MCF 10A (cell line): ENCODE measurements at regions of chr4 and their contacts with region 1.

Region 1: GRCh38 chr4:23717528-23718248 is 172.2 kb downstream of the PPARGC1A start:
- DNase-seq: peak; percentile 34
- H3K4me3 Mint-ChIP-seq: no peak overlapping the region
- H3K27ac Mint-ChIP-seq: no peak overlapping the region
- H3K4me1 Mint-ChIP-seq: no peaks in the 10 kb centered on the region
- H3K27me3 Mint-ChIP-seq: no peaks in the 10 kb centered on the region
- CTCF ChIP-seq: peak; percentile 23

Region 2: DNA sequence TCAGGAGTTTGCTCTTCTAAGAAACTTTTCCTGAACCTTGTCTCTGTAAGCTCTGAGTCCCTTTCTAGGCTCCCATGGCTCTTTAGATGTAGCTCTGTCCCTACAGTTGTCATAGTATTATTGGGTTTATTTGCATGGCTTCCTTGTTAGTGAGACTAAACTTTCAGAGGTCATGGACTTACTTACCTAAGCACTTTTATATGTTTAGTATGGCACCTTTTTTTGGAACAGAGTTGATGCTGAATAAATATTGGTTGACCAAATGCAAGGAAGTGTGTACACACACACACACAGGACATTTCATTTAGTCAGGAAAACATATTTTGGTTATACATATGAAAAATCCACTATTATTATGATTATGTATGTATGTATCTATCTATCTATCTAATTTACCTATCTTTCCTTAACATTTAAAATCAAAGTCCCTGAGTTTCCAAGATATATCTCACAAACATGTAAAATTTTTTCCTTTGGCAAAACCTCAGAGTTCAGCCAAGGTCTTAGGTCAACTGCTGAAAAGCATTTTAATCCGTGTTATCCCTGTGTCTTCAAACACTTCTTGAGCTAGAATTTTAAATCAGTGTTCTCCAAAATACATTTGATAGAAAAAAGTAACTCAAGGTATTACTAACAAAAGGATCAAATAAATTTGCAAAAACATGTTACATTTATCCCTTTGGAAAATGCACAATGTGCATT is 1072.1 kb before region 1 on chr4:
- CTCF ChIA-PET with region 1: no interaction called
- POLR2A ChIA-PET with region 1: no interaction called
- intact Hi-C with region 1: no loop called
- DNase-seq: no peak
- H3K4me3 Mint-ChIP-seq: no peak overlapping the region
- H3K27ac Mint-ChIP-seq: no peak overlapping the region
- H3K4me1 Mint-ChIP-seq: no peaks in the 10 kb centered on the region
- H3K27me3 Mint-ChIP-seq: no peaks in the 10 kb centered on the region
- CTCF ChIP-seq: no peak

Region 3: DNA sequence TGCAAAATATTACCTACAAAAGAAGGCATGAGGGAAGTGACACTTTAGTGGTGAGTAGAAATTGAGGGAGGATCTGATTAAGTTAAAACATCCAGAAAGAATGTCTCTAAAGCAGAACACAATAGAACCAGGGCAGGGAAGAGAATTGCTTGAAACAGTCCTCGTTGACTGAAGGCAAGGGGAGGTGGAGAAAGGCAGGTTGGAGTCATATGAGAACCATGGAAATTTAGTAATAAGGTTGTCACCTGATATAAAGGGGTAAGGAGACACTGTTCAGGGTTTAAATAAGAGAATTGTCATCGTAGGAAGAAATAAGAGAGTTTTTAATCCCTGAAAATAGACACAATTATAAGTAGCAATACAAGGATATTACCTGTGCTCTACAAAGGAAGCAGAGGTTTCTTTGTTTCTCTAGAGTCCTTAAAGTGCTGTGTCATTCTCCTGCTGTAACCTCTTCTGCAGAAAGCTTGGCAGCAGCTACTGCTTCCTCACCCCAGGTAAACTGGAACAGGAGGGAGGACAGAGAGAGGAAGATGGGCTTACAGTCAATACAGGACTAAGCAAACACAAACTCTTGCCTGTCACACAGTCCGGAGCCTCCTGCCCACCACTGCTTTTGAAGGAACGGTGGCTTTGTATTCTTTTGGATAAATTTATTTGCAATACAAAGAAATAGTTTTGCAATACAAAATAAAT is 86.3 kb before region 1 on chr4:
- CTCF ChIA-PET with region 1: no interaction called
- POLR2A ChIA-PET with region 1: no interaction called
- intact Hi-C with region 1: no loop called
- DNase-seq: peak; percentile 1
- H3K4me3 Mint-ChIP-seq: no peak overlapping the region
- H3K27ac Mint-ChIP-seq: no peak overlapping the region
- H3K4me1 Mint-ChIP-seq: peaks cover 7% of the 10 kb centered on the region
- H3K27me3 Mint-ChIP-seq: no peaks in the 10 kb centered on the region
- CTCF ChIP-seq: no peak

Region 4: DNA sequence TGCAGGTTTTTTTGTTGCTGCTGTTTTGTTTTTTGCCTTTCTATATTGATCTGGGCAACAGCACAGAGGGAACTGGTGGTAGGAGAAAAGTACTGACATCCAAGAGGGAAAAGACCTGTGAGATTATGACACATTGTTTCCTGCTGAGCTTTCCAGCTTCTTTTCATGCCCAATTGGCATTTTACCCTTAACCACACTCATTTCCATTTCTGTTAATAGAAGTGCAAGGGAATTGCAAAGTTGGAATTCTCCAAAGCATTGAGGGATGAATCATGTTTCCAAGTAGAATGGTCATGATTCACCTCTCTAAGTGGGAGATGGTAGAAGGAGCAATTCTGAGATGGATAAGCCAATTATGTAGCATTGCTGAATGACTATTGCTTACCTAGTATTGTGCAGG is 10.7 kb after region 1 on chr4:
- CTCF ChIA-PET with region 1: interaction called, 13 read pairs
- POLR2A ChIA-PET with region 1: no interaction called
- intact Hi-C with region 1: no loop called
- DNase-seq: peak; percentile 91
- H3K4me3 Mint-ChIP-seq: no peak overlapping the region
- H3K27ac Mint-ChIP-seq: no peak overlapping the region
- H3K4me1 Mint-ChIP-seq: peaks cover 15% of the 10 kb centered on the region
- H3K27me3 Mint-ChIP-seq: peaks cover 15% of the 10 kb centered on the region
- CTCF ChIP-seq: no peak

Region 5: DNA sequence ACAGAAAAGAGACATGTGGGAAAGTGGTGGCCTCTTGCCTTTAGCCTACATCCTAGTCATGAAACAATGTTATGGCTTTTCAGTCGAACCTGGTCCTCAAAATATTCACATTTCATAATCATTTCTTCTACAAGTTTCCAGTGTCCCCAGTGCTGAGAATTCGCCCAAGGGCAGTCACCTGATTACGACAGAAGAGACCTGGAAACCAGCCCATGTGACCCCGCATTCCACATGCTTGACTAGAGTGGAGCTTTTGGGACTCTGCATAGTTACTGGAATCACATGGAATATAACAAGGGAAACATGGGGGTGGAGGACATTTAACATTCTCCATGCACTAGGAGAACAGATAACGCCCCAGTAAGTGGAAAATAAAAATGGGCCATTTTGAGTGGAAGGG is 72.1 kb after region 1 on chr4:
- CTCF ChIA-PET with region 1: no interaction called
- POLR2A ChIA-PET with region 1: no interaction called
- intact Hi-C with region 1: no loop called
- DNase-seq: peak; percentile 81
- H3K4me3 Mint-ChIP-seq: no peak overlapping the region
- H3K27ac Mint-ChIP-seq: no peak overlapping the region
- H3K4me1 Mint-ChIP-seq: peaks cover 18% of the 10 kb centered on the region
- H3K27me3 Mint-ChIP-seq: no peaks in the 10 kb centered on the region
- CTCF ChIP-seq: no peak

Region 6: GRCh38 chr4:24203926-24204325 is 486.2 kb after region 1 on chr4:
- CTCF ChIA-PET with region 1: no interaction called
- POLR2A ChIA-PET with region 1: no interaction called
- intact Hi-C with region 1: no loop called
- DNase-seq: no peak
- H3K4me3 Mint-ChIP-seq: no peak overlapping the region
- H3K27ac Mint-ChIP-seq: no peak overlapping the region
- H3K4me1 Mint-ChIP-seq: peaks cover 7% of the 10 kb centered on the region
- H3K27me3 Mint-ChIP-seq: no peaks in the 10 kb centered on the region
- CTCF ChIP-seq: no peak